Mammary epithelial cell (primary cell): ENCODE measurements at regions of chr9 and their contacts with region 1.

Region 1: DNA sequence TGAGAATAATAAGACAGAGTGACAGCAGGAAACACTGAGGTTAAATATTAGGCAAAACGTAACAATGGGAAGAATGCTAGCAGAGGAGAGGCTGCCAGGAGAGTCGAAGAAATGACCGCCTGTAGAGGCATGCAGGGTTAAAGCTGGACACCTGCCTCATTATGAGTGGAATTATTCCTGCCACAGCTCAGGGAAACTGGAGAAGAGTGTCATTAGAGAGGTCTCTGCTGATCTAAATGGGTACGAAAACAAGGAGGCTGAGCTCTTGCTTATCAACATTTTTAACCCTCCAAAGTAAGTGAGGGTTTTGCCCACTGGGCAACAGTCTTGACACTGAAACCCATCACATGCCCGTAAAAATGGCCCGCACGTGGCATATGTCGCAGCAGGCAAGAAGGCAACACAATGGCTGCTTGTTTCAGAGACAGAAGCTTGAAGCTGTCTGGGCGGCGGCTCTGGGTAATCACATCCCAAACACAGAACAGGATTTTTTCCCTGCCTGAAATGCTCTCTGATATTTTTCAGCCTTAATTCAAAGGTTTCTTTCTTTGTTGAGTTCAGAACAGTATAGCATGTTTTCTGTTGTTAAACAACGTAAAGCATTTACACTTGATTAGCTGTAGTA is 118.7 kb downstream of the MED27 start:
- DNase-seq: peak; percentile 31
- H3K4me3 ChIP-seq: no peak overlapping the region
- H3K27ac ChIP-seq: no peak overlapping the region
- H3K4me1 ChIP-seq: peaks cover 18% of the 10 kb centered on the region
- H3K27me3 ChIP-seq: no peaks in the 10 kb centered on the region
- CTCF ChIP-seq: no peak

Region 2: DNA sequence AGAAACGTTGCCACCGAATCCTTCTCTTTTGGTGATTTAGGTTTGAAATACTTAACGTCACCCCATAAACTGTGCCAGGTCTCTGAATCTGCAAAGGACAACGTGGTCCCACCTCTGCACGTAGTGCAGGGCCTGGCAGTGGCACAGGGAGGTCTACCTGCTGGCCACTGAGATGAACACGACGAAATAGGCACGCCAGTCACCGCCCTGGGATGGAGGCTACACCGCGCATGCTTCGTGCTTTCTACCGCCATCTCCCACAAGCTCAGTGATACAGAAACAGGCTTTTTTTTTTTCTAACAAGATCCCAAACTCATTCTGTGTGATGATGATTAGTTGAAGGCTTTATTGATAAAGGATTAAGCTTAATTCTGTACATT is 81.1 kb before region 1 on chr9:
- CTCF ChIA-PET with region 1: no interaction called
- dilution Hi-C with region 1: loop called (anchors 5 kb)
- in situ Hi-C with region 1: no loop called
- intact Hi-C with region 1: no loop called
- DNase-seq: no peak
- H3K4me3 ChIP-seq: no peak overlapping the region
- H3K27ac ChIP-seq: no peak overlapping the region
- H3K4me1 ChIP-seq: no peaks in the 10 kb centered on the region
- H3K27me3 ChIP-seq: no peaks in the 10 kb centered on the region
- CTCF ChIP-seq: no peak